Activated CD4-positive, alpha-beta memory T cell treated with anti-CD3 and anti-CD28 coated beads, Interleukin-2, amount 10 ng/mL, durations not matched to agents 7 days and 5 days (primary cell): ENCODE measurements at regions of chr16 and their contacts with region 1.

Region 1: DNA sequence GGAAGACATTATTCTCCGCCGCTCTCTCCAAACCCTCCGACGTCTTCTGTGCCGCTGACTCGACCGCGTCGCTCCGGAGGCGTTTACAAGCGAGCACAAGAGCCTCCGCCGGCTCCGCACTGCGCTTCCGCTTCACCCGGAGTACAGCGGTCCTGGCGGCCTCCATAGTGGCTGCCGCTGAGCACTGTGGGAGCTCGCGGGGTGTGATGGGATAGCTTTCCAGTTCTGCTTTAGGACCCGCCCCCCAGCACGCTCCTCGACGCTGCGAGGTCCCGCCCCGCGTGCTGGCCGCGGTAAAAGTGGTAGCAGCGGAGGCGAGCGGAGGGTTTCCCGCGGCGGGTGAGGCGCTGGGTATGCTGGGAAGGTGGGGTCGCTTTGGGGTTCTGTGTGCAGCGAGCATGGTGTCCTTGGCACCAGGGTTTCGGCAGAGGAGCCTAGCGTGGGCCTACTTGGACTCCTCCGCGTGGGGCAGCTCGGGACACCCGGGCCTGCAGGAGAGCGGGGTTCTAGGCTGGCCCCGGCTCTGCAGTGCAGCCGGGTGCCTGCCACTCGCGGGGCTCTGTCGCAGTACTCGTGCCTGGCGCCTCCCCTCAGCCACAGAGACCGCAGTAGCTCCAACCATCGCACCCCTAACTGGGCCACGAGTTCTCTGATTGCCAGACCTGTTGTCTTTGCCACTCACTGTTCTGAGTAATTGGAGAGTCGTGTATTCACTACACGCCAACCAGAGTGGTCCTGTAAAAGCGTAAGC is at the starts of genes PRMT7 and SLC7A6OS:
- DNase-seq: peak; percentile 95
- H3K4me3 Mint-ChIP-seq: peak within 1 kb of the TSS; percentile 84
- H3K27ac Mint-ChIP-seq: peak within 1 kb of the TSS; percentile 96
- H3K4me1 Mint-ChIP-seq: peaks cover 55% of the 10 kb centered on the region
- H3K27me3 Mint-ChIP-seq: no peaks in the 10 kb centered on the region
- total RNA-seq, gene PRMT7: 50.4 to 52.2 TPM
- total RNA-seq, gene SLC7A6OS: 30.4 to 31.2 TPM

Region 2: DNA sequence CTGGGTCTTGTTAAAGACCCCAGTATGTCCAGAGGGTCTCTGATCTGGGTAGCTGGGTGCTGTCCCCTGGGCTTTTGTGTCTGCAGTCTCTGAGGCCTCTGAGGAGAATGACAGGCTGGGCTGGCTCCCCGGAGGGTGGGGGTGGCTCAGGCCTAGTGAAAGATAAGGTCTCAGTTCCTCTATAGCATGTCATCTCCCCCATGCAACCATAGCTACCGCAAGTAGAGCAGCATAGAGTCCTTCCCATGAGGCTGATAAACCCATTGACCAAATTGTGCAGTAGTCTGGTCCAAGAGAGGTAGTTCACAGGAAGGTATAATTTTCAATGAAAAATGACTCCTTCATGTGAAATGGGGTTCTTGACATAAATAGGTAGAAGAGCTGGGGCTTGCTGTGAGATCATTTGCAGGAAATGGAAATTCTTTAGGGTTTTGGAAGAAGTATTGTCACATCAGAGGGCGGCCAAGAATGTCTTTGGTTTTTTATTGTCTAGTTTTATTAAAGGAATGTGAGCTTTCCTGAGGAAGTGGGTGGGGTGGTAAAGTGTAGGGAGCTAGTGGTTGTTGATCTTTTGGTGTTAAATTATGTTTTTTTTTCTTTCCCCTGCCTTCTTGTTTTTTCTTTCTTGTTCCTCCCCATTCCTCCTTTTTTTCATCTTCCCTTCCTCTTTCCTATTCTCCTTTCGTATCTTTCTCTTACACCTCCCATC is 21.2 kb before region 1 on chr16:
- CTCF ChIA-PET with region 1: interaction called, 7 read pairs
- POLR2A ChIA-PET with region 1: interaction called, 71 read pairs
- DNase-seq: peak; percentile 71
- H3K4me3 Mint-ChIP-seq: peak overlapping the region; percentile 6
- H3K27ac Mint-ChIP-seq: peak overlapping the region; percentile 92
- H3K4me1 Mint-ChIP-seq: peaks cover 83% of the 10 kb centered on the region
- H3K27me3 Mint-ChIP-seq: no peaks in the 10 kb centered on the region

Region 3: DNA sequence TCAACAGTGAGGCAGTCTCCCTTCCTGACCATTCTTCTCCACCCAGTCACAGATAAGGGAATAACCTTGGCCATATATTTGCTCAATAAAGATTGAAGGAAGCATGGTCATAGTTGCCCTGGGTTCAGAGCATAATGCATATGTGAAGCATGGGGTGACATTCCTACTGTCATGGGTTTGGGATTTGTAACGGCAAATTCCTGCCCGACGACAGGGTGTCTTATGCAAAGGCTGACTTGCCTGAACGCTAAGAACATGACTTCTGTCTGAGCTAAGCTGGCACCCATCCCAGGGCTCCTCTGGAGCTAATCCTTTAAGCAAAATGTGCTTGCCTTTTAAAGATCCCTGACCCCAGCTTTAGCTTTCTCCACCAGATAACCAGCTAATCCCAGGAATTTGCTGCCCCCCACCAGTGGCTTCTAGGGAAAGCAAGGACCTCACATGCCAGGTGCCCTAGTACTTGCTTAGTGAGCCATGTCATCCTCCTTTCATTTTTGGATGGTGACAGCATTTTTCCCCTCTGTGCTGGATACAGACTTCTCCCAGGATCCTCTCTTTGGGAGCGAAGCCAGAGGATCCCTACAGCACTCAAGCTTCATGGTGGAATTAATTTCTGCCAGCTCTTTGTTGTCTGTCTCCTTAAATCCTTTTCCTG is 11.9 kb before region 1 on chr16:
- CTCF ChIA-PET with region 1: interaction called, 7 read pairs
- POLR2A ChIA-PET with region 1: interaction called, 43 read pairs
- DNase-seq: no peak
- H3K4me3 Mint-ChIP-seq: no peak overlapping the region
- H3K27ac Mint-ChIP-seq: peak overlapping the region; percentile 12
- H3K4me1 Mint-ChIP-seq: peaks cover 10% of the 10 kb centered on the region
- H3K27me3 Mint-ChIP-seq: no peaks in the 10 kb centered on the region

Region 4: GRCh38 chr16:68356249-68356918 is 45.4 kb after region 1 on chr16:
- CTCF ChIA-PET with region 1: no interaction called
- POLR2A ChIA-PET with region 1: interaction called, 15 read pairs
- DNase-seq: peak; percentile 87
- H3K4me3 Mint-ChIP-seq: peak overlapping the region; percentile 43
- H3K27ac Mint-ChIP-seq: peak overlapping the region; percentile 18
- H3K4me1 Mint-ChIP-seq: peaks cover 36% of the 10 kb centered on the region
- H3K27me3 Mint-ChIP-seq: no peaks in the 10 kb centered on the region